Aorta (tissue), 5 donors: ENCODE measurements at regions of chr2 and their contacts with region 1.

Region 1: DNA sequence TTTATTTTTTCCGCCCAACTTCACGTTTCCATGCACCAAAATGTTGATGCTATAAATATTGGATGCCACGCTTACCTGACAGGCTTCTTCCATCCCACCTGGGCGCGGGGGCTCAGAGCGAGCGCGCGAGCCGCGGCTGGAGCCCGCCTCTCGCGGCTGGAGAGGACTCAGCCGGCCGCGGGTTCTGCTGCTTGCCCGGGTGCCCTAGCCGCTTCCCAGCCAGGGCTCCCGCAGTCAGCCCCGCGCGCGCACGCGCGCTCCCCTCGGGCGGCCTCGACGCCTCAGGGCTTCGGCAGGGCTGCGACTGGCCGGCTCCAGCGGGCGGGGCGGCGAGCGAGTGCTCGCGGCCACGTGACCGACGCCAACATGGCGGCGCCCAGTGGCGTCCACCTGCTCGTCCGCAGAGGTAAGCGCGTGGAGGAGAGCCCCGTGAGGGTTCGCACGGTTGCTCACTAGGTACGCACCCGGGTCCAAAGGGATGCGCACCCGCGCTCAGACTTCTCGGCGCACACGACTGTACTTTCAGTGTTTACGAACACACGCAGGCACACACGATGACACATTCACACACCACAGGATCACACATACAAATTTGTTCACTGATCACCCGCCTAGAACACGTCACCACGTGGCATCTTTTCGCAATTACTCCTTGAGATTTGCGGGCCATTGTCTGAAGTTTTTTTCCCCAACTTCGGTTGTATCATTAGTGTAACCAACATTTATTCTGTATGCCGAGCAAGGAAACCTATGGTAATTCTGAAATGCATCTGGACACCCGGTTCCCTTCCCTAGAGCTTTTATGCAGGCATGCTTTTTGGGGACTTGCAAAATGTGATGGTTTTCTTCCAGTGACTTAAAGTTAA is at the start of gene METAP1D:
- DNase-seq: peak; percentile 94 to 97
- ATAC-seq: peak; percentile 99
- H3K4me3 ChIP-seq: peak within 1 kb of the TSS; percentile 55 to 65
- H3K27ac ChIP-seq: no peak within 1 kb of the TSS
- H3K4me1 ChIP-seq: no peaks in the 10 kb centered on the region
- H3K27me3 ChIP-seq: no peaks in the 10 kb centered on the region
- total RNA-seq, gene METAP1D: 2.9 to 5.4 TPM

Region 2: GRCh38 chr2:171922230-171923022 is 77.4 kb before region 1 on chr2 and contains the start of gene HAT1:
- intact Hi-C with region 1: loop called in 1 of 2 experiments (anchors 2 kb)
- DNase-seq: peak; percentile 98
- ATAC-seq: peak; percentile 100
- H3K4me3 ChIP-seq: peak within 1 kb of the TSS; percentile 58 to 67
- H3K27ac ChIP-seq: peak within 1 kb of the TSS; percentile 1 to 86
- H3K4me1 ChIP-seq: no peaks in the 10 kb centered on the region
- H3K27me3 ChIP-seq: no peaks in the 10 kb centered on the region
- total RNA-seq, gene HAT1: 27.8 to 32.6 TPM

Region 3: DNA sequence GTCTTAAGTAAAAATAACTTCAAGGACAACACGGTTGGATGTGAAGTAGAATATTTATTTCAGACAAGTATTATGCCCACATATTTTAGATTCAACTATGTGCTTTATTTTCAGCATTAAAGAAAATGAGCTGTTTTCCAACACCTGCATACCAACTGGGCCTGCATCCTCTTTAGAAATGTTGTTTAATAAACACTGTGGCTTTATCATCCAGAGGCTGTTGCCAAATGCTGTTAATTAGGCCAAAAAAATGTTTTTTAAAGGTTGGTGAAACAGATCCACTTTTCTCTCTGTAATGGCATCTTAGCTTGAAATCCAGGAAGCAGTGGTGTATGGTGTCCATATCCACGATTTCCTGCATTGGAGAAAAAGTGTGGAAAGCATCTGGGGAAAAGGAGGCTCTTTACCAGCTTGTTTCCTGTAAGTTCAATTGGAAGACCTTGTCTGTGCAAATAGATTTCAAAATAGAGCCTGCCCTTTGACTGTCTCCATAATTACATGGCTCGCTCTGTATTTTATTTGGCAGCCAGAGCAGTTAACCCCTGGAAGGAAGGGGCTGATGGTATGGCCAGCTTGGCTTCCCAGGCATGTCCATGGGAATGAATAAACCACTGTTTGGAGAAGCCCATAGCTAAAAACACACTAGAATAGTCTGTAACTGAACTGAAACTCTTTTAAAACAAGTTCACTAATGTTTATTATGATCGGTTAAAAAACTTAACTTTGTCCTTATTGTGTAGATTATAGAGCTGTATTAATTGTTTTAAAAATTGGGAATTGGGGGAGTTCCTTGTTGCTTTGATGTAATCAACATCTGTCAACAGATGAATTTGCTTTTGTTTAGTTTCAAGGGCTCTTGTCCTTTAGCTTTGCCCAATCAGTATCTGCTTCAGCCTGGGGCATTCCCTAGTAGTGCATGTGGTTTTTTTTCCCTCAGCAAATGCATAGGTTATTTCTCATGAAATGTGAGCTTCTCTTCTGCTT is 52.5 kb after region 1 on chr2:
- intact Hi-C with region 1: no loop called
- DNase-seq: no peak
- ATAC-seq: no peak
- H3K4me3 ChIP-seq: no peak overlapping the region
- H3K27ac ChIP-seq: no peak overlapping the region
- H3K4me1 ChIP-seq: no peaks in the 10 kb centered on the region
- H3K27me3 ChIP-seq: no peaks in the 10 kb centered on the region

Region 4: GRCh38 chr2:172102391-172103278 is 102.8 kb after region 1 on chr2 and contains the start of gene DLX2:
- intact Hi-C with region 1: loop called in 1 of 2 experiments (anchors 10 kb)
- DNase-seq: peak; percentile 89 to 90
- ATAC-seq: peak; percentile 47
- H3K4me3 ChIP-seq: peak within 1 kb of the TSS in 1 of 2 donors; percentile 30
- H3K27ac ChIP-seq: no peak within 1 kb of the TSS
- H3K4me1 ChIP-seq: no peaks in the 10 kb centered on the region
- H3K27me3 ChIP-seq: no peaks in the 10 kb centered on the region
- total RNA-seq, gene DLX2: not detected

Region 5: GRCh38 chr2:172137109-172137508 is 137.3 kb after region 1 on chr2:
- intact Hi-C with region 1: no loop called
- DNase-seq: no peak
- ATAC-seq: no peak
- H3K4me3 ChIP-seq: no peak overlapping the region
- H3K27ac ChIP-seq: no peak overlapping the region
- H3K4me1 ChIP-seq: no peaks in the 10 kb centered on the region
- H3K27me3 ChIP-seq: peaks cover 0 to 3% of the 10 kb centered on the region in 2 donors

Region 6: DNA sequence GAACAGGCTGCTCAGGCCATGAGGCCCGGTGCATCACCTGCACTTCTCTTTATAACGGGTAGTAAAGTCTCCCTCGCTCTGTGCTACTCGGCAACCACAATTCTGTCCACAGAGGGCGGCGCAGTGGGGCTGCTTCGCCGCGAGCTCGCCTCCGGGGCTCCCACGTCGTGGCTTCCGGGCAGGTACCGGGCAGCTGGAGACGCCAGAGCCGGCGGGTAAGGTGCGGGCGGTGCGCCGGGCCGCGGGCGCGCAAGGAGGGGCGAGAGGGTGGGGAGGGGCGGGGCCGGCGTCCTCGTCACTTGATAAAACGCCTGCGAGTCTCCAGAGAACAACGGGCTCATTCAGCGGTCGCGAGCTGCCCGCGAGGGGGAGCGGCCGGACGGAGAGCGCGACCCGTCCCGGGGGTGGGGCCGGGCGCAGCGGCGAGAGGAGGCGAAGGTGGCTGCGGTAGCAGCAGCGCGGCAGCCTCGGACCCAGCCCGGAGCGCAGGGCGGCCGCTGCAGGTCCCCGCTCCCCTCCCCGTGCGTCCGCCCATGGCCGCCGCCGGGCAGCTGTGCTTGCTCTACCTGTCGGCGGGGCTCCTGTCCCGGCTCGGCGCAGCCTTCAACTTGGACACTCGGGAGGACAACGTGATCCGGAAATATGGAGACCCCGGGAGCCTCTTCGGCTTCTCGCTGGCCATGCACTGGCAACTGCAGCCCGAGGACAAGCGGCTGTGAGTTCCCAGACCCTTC is 427.6 kb after region 1 on chr2 and contains the start of gene ITGA6:
- intact Hi-C with region 1: no loop called
- DNase-seq: peak; percentile 73 to 89
- ATAC-seq: peak; percentile 62
- H3K4me3 ChIP-seq: peak within 1 kb of the TSS; percentile 35 to 85
- H3K27ac ChIP-seq: no peak within 1 kb of the TSS
- H3K4me1 ChIP-seq: no peaks in the 10 kb centered on the region
- H3K27me3 ChIP-seq: no peaks in the 10 kb centered on the region
- total RNA-seq, gene ITGA6: 49.0 to 67.6 TPM